Mammary epithelial cell (primary cell): ENCODE measurements at regions of chr11 and their contacts with region 1.

Region 1: GRCh38 chr11:129846501-129847335 is 31.1 kb downstream of the TMEM45B start:
- DNase-seq: peak; percentile 95
- H3K4me3 ChIP-seq: no peak overlapping the region
- H3K27ac ChIP-seq: peak overlapping the region; percentile 47
- H3K4me1 ChIP-seq: peaks cover 14% of the 10 kb centered on the region
- H3K27me3 ChIP-seq: no peaks in the 10 kb centered on the region
- CTCF ChIP-seq: no peak

Region 2: DNA sequence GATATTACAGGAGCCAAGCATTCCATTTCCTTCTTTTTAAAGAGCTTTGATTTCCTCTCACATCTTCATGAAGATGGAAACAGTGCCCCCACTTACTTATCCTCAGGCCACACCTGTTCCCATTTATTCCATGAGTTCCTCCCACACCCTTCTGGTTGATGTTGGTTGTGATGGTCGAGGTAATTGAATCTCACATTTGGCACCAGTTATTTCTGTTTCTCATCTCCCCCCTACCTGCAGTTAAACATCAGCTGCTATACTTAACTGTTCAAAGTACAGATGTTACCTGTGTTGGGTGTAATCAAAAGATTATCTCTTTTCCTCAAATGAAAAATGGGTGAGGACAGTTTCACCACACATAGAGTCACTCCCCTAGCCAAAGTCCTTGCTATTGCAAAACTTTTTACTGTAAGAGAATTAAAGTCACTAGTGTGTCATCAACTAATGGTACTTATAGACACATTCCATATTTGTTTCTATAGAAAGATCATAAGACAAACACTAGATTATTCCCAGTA is 29.1 kb before region 1 on chr11:
- CTCF ChIA-PET with region 1: no interaction called
- dilution Hi-C with region 1: no loop called
- in situ Hi-C with region 1: no loop called
- intact Hi-C with region 1: no loop called
- DNase-seq: no peak
- H3K4me3 ChIP-seq: no peak overlapping the region
- H3K27ac ChIP-seq: no peak overlapping the region
- H3K4me1 ChIP-seq: peaks cover 7% of the 10 kb centered on the region
- H3K27me3 ChIP-seq: no peaks in the 10 kb centered on the region
- CTCF ChIP-seq: no peak

Region 3: DNA sequence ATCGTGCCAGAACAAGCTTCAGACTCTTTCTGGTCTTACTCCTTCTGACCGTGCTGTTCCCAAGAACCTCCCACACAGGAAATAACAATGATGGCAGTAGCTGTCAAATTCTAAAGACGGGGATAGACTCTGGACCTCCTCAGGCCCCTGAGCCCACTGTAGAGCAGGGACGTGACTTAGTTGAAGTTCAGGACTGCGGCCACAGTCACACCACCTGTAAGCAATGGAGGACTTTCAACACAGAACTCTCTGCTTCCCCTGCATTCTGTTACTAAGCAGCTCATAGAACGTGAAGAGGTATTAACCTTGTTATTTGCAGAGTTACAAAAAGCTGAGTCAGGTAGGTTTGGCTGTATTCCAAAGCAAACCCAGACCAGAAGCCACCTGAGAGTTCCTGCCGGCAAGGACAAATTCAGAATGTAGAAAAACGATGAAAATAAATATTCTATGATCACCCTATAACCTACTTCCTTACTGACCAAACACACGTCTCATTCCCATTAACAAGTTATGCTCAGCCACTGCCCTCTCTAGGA is 18.3 kb before region 1 on chr11:
- CTCF ChIA-PET with region 1: interaction called, 5 read pairs
- dilution Hi-C with region 1: no loop called
- in situ Hi-C with region 1: no loop called
- intact Hi-C with region 1: loop called (anchors 2 kb)
- DNase-seq: peak; percentile 81
- H3K4me3 ChIP-seq: peak overlapping the region in 1 of 3 experiments; percentile 13
- H3K27ac ChIP-seq: peak overlapping the region; percentile 95
- H3K4me1 ChIP-seq: peaks cover 48% of the 10 kb centered on the region
- H3K27me3 ChIP-seq: no peaks in the 10 kb centered on the region
- CTCF ChIP-seq: no peak

Region 4: DNA sequence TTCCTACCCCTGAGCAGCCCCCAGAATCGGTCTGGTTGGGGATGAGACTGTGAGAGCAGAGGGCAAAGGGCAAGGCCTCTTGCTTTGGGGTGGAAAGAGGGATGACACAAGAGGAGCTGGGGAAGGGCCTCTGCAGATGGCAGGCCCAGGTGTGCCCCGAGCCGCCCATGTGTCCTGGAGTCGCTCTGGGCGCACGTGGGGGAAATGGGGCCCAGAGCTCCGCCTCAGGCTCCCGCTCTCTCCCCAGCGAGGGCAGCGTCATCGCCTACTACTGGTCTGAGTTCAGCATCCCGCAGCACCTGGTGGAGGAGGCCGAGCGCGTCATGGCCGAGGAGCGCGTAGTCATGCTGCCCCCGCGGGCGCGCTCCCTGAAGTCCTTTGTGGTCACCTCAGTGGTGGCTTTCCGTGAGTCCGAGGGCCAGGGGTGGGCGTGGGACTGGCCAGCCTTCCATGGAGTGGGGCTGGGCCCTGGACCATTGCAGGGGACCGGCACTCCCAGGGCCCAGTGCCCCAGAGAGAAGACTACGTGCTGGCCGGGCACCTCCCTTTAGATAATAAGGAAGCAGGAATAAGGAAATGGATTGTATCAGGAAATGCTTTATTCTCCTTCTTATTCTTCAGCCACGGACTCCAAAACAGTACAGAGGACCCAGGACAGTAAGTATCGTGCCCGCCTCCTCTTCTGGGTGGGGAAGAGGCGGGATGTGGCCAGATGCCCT is 342.9 kb after region 1 on chr11:
- CTCF ChIA-PET with region 1: no interaction called
- dilution Hi-C with region 1: no loop called
- in situ Hi-C with region 1: no loop called
- intact Hi-C with region 1: no loop called
- DNase-seq: no peak
- H3K4me3 ChIP-seq: no peak overlapping the region
- H3K27ac ChIP-seq: no peak overlapping the region
- H3K4me1 ChIP-seq: no peaks in the 10 kb centered on the region
- H3K27me3 ChIP-seq: no peaks in the 10 kb centered on the region
- CTCF ChIP-seq: no peak